Activated CD4-positive, alpha-beta T cell treated with anti-CD3 and anti-CD28 coated beads, Interleukin-2, amount 10 ng/mL, durations not matched to agents 24 days and 14 days (primary cell): ENCODE measurements at regions of chr10 and their contacts with region 1.

Region 1: DNA sequence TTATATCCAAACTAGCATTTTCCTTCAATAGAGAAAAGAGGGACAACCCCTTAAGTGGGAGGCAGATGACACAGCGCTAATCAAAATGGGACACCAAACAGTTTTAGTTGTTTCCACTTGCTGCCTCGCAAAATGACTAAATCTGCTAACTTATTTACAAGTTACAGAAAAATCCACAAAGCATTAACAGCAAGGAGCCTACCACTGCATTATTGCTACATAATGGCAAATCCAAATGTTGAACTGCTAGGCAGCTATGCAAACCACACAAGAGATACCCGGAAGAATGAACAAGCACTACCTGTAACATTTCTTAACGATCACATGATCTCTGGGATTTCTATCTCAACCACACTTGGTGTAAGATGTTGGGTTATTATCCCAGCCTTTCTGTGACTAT is 96.7 kb downstream of the SFMBT2 start:
- DNase-seq: no peak
- H3K4me3 Mint-ChIP-seq: peak overlapping the region; percentile 47
- H3K27ac Mint-ChIP-seq: peak overlapping the region; percentile 84
- H3K4me1 Mint-ChIP-seq: peaks cover 50% of the 10 kb centered on the region
- H3K27me3 Mint-ChIP-seq: no peaks in the 10 kb centered on the region

Region 2: GRCh38 chr10:7275761-7276440 is 38.3 kb before region 1 on chr10:
- intact Hi-C with region 1: loop called (anchors 2 kb)
- DNase-seq: no peak
- H3K4me3 Mint-ChIP-seq: peak overlapping the region; percentile 21
- H3K27ac Mint-ChIP-seq: peak overlapping the region; percentile 81
- H3K4me1 Mint-ChIP-seq: peaks cover 50% of the 10 kb centered on the region
- H3K27me3 Mint-ChIP-seq: no peaks in the 10 kb centered on the region

Region 3: GRCh38 chr10:7445474-7446185 is 131.5 kb after region 1 on chr10:
- intact Hi-C with region 1: no loop called
- DNase-seq: no peak
- H3K4me3 Mint-ChIP-seq: no peak overlapping the region
- H3K27ac Mint-ChIP-seq: no peak overlapping the region
- H3K4me1 Mint-ChIP-seq: no peaks in the 10 kb centered on the region
- H3K27me3 Mint-ChIP-seq: peaks cover 9% of the 10 kb centered on the region